ENCODE measurements at regions of chr19 and their contacts with region 1.

Region 1: GRCh38 chr19:2236314-2237050 is at the starts of genes PLEKHJ1 and SF3A2:
- DNase-seq: peak; percentile 98

Region 2: DNA sequence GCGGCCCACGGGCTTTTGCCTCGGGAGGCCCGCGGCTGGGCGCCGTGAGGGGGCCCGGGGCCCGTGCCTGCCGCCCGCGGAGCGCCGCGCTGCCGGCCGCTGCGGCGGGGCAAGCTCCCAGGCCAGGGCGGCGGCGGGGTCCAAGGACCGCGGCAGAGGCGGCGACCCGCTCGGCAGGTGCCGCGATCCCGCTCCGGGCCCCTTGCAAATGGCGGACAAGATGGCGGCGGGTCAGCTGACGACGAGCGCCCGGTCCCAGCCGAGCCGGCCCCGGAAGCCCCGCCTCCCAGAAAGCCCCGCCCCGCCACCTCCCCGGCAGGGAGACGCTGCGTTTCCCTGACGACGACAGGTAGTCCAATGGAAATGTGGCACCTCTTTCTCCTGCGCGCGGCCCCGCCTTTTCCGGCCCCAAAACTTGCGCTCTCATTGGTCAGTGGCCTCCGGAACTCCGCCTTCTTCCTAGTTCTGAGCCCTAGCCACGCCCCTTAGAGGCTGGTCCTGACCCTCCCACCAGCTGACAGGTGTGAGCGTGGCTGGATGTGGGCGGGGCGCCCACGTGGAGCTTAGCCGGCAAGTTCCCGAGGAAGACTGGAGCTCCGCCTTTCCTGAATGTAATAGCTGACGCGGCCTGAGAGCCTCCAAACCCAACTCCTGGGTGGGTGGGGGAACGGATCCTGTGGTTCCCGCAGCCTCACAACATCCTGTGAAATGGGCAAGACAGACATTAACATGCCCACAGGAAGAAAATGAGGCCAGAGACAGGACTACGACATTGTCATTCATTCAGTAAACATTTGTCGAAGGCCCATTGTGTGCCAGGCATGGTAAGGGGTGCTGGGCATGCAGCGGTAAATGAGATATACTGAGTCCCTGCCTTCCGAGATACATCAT is 84.9 kb before region 1 on chr19 and contains the start of gene AP3D1:
- CTCF ChIA-PET with region 1: interaction called, 12 read pairs
- POLR2A ChIA-PET with region 1: interaction called, 5 read pairs
- DNase-seq: peak; percentile 99

Region 3: GRCh38 chr19:2270408-2271233 is 34.1 kb after region 1 on chr19:
- CTCF ChIA-PET with region 1: interaction called, 4 read pairs
- POLR2A ChIA-PET with region 1: interaction called, 18 read pairs
- DNase-seq: no peak

Region 4: GRCh38 chr19:2578901-2579677 is 342.6 kb after region 1 on chr19:
- CTCF ChIA-PET with region 1: no interaction called
- POLR2A ChIA-PET with region 1: no interaction called
- DNase-seq: peak; percentile 80

Measured in HEK293T (cell line).